ENCODE measurements at regions of chr3 and their contacts with region 1.

Region 1: GRCh38 chr3:14933820-14934425 is 13.5 kb upstream of the NR2C2 start:
- DNase-seq: no peak
- ATAC-seq: no peak
- H3K4me3 ChIP-seq: no peak overlapping the region
- H3K4me3 Mint-ChIP-seq: no peak overlapping the region
- H3K27ac ChIP-seq: no peak overlapping the region
- H3K27ac Mint-ChIP-seq: no peak overlapping the region
- H3K4me1 ChIP-seq: no peaks in the 10 kb centered on the region
- H3K4me1 Mint-ChIP-seq: no peaks in the 10 kb centered on the region
- H3K27me3 ChIP-seq: no peaks in the 10 kb centered on the region
- H3K27me3 Mint-ChIP-seq: no peaks in the 10 kb centered on the region
- CTCF ChIP-seq: no peak

Region 2: DNA sequence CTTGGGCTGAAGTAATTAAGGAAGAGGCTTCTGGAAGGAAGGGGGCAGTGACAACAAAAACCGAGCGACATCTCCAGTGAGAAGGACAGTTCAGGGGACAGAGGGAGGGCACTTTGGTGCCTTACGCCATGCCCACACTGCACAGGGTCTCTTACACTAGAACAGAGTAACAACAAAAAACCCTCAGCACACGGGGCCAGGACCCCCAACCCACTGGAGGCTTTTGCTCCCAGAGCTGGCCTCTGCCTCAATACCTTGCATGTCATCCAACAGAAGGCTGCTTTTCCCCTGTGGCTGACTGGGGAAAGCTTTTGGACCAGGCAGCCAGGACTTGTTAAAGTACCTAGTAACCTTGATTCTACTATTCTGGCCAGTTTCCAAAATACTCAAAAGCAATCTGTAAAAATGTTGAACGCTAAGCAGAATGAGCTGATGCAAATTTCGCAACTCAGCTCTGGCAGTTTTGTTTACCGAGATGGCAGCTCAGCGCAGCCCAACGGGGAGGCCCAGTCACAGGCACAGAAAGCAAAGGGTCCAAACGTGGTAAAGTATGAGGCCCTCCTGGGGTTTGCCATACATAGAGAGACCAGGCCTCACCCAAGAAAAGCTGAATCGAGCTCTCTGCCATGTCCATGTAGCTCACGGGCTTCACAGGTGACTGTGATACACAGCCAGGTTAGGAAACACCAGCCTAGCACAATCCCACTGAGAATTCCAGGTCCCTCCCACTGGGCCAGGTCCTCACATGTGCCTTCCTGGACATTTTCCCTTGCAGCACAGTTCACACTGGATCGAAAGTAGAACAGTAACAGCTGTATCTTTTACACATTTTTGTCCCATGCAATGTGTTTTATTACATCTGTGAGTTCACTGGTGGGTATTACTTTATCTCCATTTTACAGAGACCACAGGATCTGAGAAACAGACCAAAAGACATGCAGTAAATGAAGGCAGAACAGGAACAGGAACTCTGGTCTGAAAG is 815.2 kb before region 1 on chr3:
- CTCF ChIA-PET with region 1: no interaction called
- POLR2A ChIA-PET with region 1: no interaction called
- intact Hi-C with region 1: loop called in 1 of 2 experiments (anchors 5 kb)
- DNase-seq: no peak
- ATAC-seq: no peak
- H3K4me3 ChIP-seq: no peak overlapping the region
- H3K4me3 Mint-ChIP-seq: no peak overlapping the region
- H3K27ac ChIP-seq: no peak overlapping the region
- H3K27ac Mint-ChIP-seq: no peak overlapping the region
- H3K4me1 ChIP-seq: peaks cover 14% of the 10 kb centered on the region
- H3K4me1 Mint-ChIP-seq: peaks cover 29% of the 10 kb centered on the region
- H3K27me3 ChIP-seq: no peaks in the 10 kb centered on the region
- H3K27me3 Mint-ChIP-seq: no peaks in the 10 kb centered on the region
- CTCF ChIP-seq: no peak

Region 3: DNA sequence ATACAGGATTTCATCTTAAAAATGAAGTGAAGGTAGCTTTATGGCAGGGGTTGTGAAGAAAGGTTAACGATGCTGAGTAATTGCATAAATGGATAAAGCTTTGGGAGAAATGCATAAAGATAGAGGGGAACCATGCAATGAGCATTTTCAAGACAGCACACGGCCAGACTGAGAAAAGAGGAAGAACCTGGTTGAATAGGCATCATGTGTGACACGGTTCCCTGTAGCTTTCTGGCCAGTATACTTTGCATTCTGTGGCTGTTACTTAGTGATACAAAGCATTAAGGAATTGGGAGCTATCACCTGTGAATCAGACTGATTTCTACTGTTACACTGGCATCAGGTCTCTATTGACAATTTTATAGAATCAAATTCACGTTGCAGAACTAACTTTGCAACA is 46.8 kb after region 1 on chr3:
- CTCF ChIA-PET with region 1: no interaction called
- POLR2A ChIA-PET with region 1: no interaction called
- intact Hi-C with region 1: no loop called
- DNase-seq: no peak
- ATAC-seq: no peak
- H3K4me3 ChIP-seq: no peak overlapping the region
- H3K4me3 Mint-ChIP-seq: no peak overlapping the region
- H3K27ac ChIP-seq: no peak overlapping the region
- H3K27ac Mint-ChIP-seq: no peak overlapping the region
- H3K4me1 ChIP-seq: no peaks in the 10 kb centered on the region
- H3K4me1 Mint-ChIP-seq: peaks cover 50% of the 10 kb centered on the region
- H3K27me3 ChIP-seq: no peaks in the 10 kb centered on the region
- H3K27me3 Mint-ChIP-seq: no peaks in the 10 kb centered on the region
- CTCF ChIP-seq: no peak

Region 4: DNA sequence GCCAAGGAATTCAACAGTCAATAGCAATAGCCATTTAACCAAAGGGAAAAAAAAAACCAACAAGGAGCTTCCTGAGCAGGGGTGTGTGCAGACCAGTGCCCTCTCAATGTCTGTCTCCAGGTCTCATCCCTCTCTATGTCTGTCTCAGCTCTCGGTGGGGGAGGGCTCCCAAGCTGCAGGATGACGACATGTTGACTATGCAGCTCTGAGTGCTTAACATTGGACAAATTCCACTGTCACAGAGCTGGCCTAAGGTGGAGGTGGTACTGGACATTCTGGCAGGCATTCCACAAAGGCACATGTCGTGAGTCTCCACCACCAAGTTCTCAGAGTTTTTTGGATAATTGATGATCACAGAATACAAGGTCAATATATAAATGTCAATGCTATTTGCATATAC is 270.1 kb after region 1 on chr3:
- CTCF ChIA-PET with region 1: no interaction called
- POLR2A ChIA-PET with region 1: no interaction called
- intact Hi-C with region 1: no loop called
- DNase-seq: no peak
- ATAC-seq: no peak
- H3K4me3 ChIP-seq: no peak overlapping the region
- H3K4me3 Mint-ChIP-seq: peak overlapping the region; percentile 47
- H3K27ac ChIP-seq: no peak overlapping the region
- H3K27ac Mint-ChIP-seq: no peak overlapping the region
- H3K4me1 ChIP-seq: peaks cover 18% of the 10 kb centered on the region
- H3K4me1 Mint-ChIP-seq: peaks cover 34% of the 10 kb centered on the region
- H3K27me3 ChIP-seq: no peaks in the 10 kb centered on the region
- H3K27me3 Mint-ChIP-seq: no peaks in the 10 kb centered on the region
- CTCF ChIP-seq: no peak

Region 5: GRCh38 chr3:16060358-16060852 is 1126.5 kb after region 1 on chr3:
- CTCF ChIA-PET with region 1: no interaction called
- POLR2A ChIA-PET with region 1: no interaction called
- intact Hi-C with region 1: no loop called
- DNase-seq: no peak
- ATAC-seq: no peak
- H3K4me3 ChIP-seq: no peak overlapping the region
- H3K4me3 Mint-ChIP-seq: no peak overlapping the region
- H3K27ac ChIP-seq: no peak overlapping the region
- H3K27ac Mint-ChIP-seq: no peak overlapping the region
- H3K4me1 ChIP-seq: no peaks in the 10 kb centered on the region
- H3K4me1 Mint-ChIP-seq: no peaks in the 10 kb centered on the region
- H3K27me3 ChIP-seq: no peaks in the 10 kb centered on the region
- H3K27me3 Mint-ChIP-seq: peaks cover 15% of the 10 kb centered on the region
- CTCF ChIP-seq: no peak